Gastrocnemius medialis (tissue), 4 donors: ENCODE measurements at regions of chrX and their contacts with region 1.

Region 1: GRCh38 chrX:96383428-96383827 is 301.2 kb upstream of the DIAPH2 start:
- DNase-seq: no peak
- ATAC-seq: no peak
- H3K4me3 ChIP-seq: no peak overlapping the region
- H3K27ac ChIP-seq: no peak overlapping the region
- H3K4me1 ChIP-seq: no peaks in the 10 kb centered on the region
- H3K27me3 ChIP-seq: no peaks in the 10 kb centered on the region
- CTCF ChIP-seq: no peak
- POLR2A ChIP-seq: no peak

Region 2: DNA sequence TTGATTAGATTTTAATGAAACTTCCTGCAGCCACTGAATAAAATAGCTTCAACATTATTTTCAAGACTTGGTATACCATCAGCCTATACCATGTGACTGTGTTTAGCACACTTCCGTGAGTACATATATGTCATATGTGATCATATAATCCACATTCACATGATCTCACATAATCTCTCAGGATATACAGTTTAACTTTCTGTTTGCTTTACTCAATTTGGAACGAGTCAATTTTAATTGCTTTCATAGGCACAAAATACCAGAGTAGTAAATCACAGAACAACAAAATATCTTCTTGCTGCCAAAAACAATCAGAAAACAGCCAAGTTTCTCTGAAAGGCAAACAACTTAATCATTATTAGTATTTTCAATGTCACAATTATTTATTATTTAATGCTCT is 429.9 kb before region 1 on chrX:
- in situ Hi-C with region 1: no loop called
- intact Hi-C with region 1: no loop called
- DNase-seq: no peak
- ATAC-seq: no peak
- H3K4me3 ChIP-seq: no peak overlapping the region
- H3K27ac ChIP-seq: no peak overlapping the region
- H3K4me1 ChIP-seq: no peaks in the 10 kb centered on the region
- H3K27me3 ChIP-seq: no peaks in the 10 kb centered on the region
- CTCF ChIP-seq: no peak
- POLR2A ChIP-seq: no peak

Region 3: GRCh38 chrX:96361844-96362243 is 21.6 kb before region 1 on chrX:
- in situ Hi-C with region 1: no loop called
- intact Hi-C with region 1: loop called (anchors 1 kb)
- DNase-seq: no peak
- ATAC-seq: no peak
- H3K4me3 ChIP-seq: no peak overlapping the region
- H3K27ac ChIP-seq: no peak overlapping the region
- H3K4me1 ChIP-seq: no peaks in the 10 kb centered on the region
- H3K27me3 ChIP-seq: no peaks in the 10 kb centered on the region
- CTCF ChIP-seq: no peak
- POLR2A ChIP-seq: no peak

Region 4: DNA sequence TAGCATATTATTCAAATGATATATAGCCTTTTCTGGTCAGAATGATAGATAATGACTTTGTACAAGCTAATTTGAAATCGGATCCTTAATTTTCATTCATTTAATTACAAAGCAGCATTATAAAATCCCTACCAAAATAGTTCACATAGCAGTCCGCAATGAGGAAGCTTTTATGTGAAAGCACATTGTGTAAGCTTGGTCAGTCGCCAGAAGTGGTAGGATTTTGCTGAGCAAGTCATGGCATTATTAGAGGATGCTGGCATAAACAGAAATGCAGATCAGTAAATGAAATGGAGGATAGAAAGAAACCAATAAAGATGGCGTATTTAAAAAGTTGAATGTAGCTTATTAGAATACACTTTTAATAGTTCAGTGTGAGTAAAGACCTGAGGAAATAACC is 208.0 kb after region 1 on chrX:
- in situ Hi-C with region 1: no loop called
- intact Hi-C with region 1: no loop called
- DNase-seq: no peak
- ATAC-seq: no peak
- H3K4me3 ChIP-seq: no peak overlapping the region
- H3K27ac ChIP-seq: no peak overlapping the region
- H3K4me1 ChIP-seq: no peaks in the 10 kb centered on the region
- H3K27me3 ChIP-seq: no peaks in the 10 kb centered on the region
- CTCF ChIP-seq: no peak
- POLR2A ChIP-seq: no peak